WTC11 (cell line): ENCODE measurements at regions of chr19 and their contacts with region 1.

Region 1: GRCh38 chr19:2636897-2637683 is 65.4 kb downstream of the GNG7 start:
- DNase-seq: peak; percentile 76
- ATAC-seq: peak; percentile 70
- H3K4me3 Mint-ChIP-seq: peak overlapping the region; percentile 63
- H3K27ac Mint-ChIP-seq: no peak overlapping the region
- H3K4me1 Mint-ChIP-seq: peaks cover 17% of the 10 kb centered on the region
- H3K27me3 Mint-ChIP-seq: no peaks in the 10 kb centered on the region; the same call in 1 of the 2 replicates
- CTCF ChIP-seq: peak; percentile 83; the same call in 1 of the 2 replicates

Region 2: GRCh38 chr19:2427429-2428320 is 209.4 kb before region 1 on chr19 and contains the start of gene TIMM13:
- CTCF ChIA-PET with region 1: interaction called, 11 read pairs
- POLR2A ChIA-PET with region 1: interaction called, 4 read pairs
- DNase-seq: peak; percentile 97
- ATAC-seq: peak; percentile 50
- H3K4me3 Mint-ChIP-seq: peak within 1 kb of the TSS; percentile 88
- H3K27ac Mint-ChIP-seq: peak within 1 kb of the TSS; percentile 97
- H3K4me1 Mint-ChIP-seq: peaks cover 27% of the 10 kb centered on the region
- H3K27me3 Mint-ChIP-seq: no peaks in the 10 kb centered on the region
- CTCF ChIP-seq: no peak
- total RNA-seq, gene TIMM13: 296 to 342 TPM (median 309 TPM) in 3 replicates

Region 3: GRCh38 chr19:2543463-2544442 is 93.3 kb before region 1 on chr19:
- CTCF ChIA-PET with region 1: interaction called, 13 read pairs
- POLR2A ChIA-PET with region 1: no interaction called
- DNase-seq: peak; percentile 91
- ATAC-seq: peak; percentile 67
- H3K4me3 Mint-ChIP-seq: peak overlapping the region; percentile 34; the same call in 1 of the 2 replicates
- H3K27ac Mint-ChIP-seq: peak overlapping the region; percentile 97
- H3K4me1 Mint-ChIP-seq: peaks cover 41% of the 10 kb centered on the region
- H3K27me3 Mint-ChIP-seq: peaks cover 3% of the 10 kb centered on the region; the same call in 1 of the 2 replicates
- CTCF ChIP-seq: no peak

Region 4: DNA sequence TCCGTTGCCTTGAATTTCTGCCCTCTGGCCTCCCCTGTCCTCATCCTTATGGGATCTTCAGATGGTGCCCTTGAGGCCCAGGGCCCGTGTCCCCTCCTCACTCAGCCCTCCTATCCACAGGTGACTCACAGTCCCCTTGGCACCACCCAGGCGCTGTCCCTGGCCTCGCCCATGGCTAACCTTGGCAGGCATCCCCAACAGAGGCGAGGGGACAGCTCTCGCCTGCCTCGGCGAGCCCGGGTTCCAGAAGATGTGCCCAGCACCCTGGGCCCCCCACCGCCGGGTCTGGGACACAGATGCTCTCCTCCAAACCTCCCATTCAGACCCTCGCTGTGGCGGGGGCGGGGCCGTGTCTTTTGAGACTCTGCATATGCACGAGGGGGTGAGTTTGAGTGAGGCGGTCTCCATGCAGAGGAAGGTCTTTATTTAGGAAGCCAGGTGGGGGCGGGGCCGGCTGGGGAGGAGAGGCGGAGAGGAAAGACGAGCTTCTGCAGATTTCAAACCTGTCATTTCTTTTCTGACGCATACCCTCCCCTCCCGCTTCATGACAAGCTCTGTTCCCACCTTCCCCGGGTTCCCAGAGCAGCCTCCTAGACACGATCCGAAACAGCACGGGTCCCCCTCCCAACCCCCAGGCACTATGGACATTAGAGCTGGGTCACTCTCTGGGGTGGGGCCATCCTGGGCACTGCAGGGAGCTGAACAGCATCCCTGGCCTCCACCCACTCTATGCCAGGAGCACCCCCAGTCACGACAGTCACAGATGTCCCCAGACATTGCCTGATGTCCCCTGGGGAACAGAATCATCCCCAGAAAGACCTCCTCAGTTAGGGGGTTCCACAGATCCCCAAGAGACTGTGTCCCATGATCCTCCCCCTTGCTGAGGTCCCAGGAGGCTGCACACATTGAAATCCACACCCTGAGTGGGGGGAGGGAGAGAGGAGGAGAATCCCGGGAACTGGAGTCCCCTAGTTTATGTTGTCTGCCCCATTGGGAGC is 16.9 kb after region 1 on chr19:
- CTCF ChIA-PET with region 1: interaction called, 37 read pairs
- POLR2A ChIA-PET with region 1: no interaction called
- DNase-seq: peak; percentile 63
- ATAC-seq: peak; percentile 71
- H3K4me3 Mint-ChIP-seq: peak overlapping the region; percentile 56
- H3K27ac Mint-ChIP-seq: no peak overlapping the region
- H3K4me1 Mint-ChIP-seq: peaks cover 9% of the 10 kb centered on the region
- H3K27me3 Mint-ChIP-seq: no peaks in the 10 kb centered on the region
- CTCF ChIP-seq: no peak

Region 5: GRCh38 chr19:2702162-2703076 is 65.3 kb after region 1 on chr19 and contains the start of gene GNG7:
- CTCF ChIA-PET with region 1: interaction called, 11 read pairs
- POLR2A ChIA-PET with region 1: no interaction called
- DNase-seq: peak; percentile 96
- ATAC-seq: peak; percentile 99
- H3K4me3 Mint-ChIP-seq: peak within 1 kb of the TSS; percentile 79
- H3K27ac Mint-ChIP-seq: peak within 1 kb of the TSS; percentile 53; the same call in 1 of the 2 replicates
- H3K4me1 Mint-ChIP-seq: peaks cover 16% of the 10 kb centered on the region
- H3K27me3 Mint-ChIP-seq: peaks cover 24% of the 10 kb centered on the region
- CTCF ChIP-seq: no peak
- total RNA-seq, gene GNG7: 9.6 to 14.3 TPM (median 13.2 TPM) in 3 replicates